ENCODE measurements at regions of chr9 and their contacts with region 1.

Region 1: GRCh38 chr9:6024020-6024554 is 8.7 kb upstream of the RANBP6 start:
- DNase-seq: peak; percentile 54
- ATAC-seq: peak; percentile 90
- H3K4me3 Mint-ChIP-seq: no peak overlapping the region
- H3K27ac Mint-ChIP-seq: no peak overlapping the region
- H3K4me1 Mint-ChIP-seq: peaks cover 5% of the 10 kb centered on the region
- H3K27me3 Mint-ChIP-seq: peaks cover 1% of the 10 kb centered on the region
- CTCF ChIP-seq: peak; percentile 73

Region 2: DNA sequence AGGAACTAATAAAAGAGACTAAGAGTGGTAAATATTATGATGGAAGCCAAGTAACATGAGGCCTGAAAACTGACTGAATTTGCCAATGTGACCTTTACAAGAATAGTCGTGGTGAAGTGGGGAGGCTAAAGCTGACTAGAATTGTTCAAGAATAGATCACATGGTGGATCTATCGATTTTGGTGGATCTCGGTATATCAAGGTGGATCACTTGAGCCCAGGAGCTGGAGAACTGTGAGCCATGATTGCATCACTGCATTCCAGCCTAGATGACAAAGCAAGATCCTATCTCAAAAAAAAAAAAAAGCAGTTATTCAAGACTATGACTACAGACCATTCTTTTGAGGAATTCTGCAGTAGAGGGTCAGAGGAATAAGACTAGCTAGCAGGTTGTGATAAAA is 206.2 kb before region 1 on chr9:
- CTCF ChIA-PET with region 1: no interaction called
- POLR2A ChIA-PET with region 1: no interaction called
- intact Hi-C with region 1: no loop called
- DNase-seq: no peak
- ATAC-seq: no peak
- H3K4me3 Mint-ChIP-seq: no peak overlapping the region
- H3K27ac Mint-ChIP-seq: no peak overlapping the region
- H3K4me1 Mint-ChIP-seq: peaks cover 12% of the 10 kb centered on the region
- H3K27me3 Mint-ChIP-seq: no peaks in the 10 kb centered on the region
- CTCF ChIP-seq: no peak

Region 3: DNA sequence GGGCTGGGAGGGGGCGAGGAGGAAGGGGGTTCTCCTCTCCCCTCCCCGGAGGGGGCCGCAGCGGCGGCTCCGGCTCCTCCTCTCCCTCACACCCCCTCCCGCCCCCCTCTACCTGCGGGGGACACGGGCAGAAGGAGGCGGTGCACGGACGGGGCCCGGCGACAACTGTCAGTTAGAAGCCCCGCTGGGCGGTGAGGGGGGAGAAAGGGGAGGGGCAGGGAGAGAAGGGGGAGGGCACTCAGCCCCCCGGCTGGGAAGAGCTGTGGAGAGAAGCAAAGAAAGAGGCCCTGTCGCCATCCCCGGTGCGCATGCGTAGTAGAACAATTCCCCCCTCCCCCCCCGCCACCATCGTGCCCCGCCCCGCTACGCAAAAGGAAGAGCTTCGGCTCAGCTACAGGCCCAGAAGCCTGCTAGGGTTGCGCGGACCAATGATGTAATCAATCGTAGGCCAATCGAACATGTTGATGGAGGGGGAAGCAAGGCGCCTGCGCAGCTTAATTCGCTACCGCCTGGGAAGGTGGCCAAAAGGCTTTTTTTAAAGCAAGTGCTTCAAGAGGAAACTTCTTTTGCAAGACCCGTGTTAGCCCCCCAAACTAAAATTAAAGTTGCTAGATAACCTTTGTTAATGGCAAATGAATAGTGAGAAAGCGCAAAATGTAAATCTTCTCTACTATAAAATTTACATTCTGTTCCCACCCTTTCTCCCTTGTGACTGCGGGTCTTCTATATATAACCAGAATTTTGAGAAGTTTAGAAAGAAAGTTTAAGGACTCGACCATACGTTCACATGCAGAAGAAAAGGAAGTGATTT is 15.7 kb before region 1 on chr9:
- CTCF ChIA-PET with region 1: interaction called, 11 read pairs
- POLR2A ChIA-PET with region 1: interaction called, 3 read pairs
- intact Hi-C with region 1: no loop called
- DNase-seq: peak; percentile 97
- ATAC-seq: peak; percentile 81
- H3K4me3 Mint-ChIP-seq: peak overlapping the region; percentile 96
- H3K27ac Mint-ChIP-seq: peak overlapping the region; percentile 84
- H3K4me1 Mint-ChIP-seq: peaks cover 60% of the 10 kb centered on the region
- H3K27me3 Mint-ChIP-seq: no peaks in the 10 kb centered on the region
- CTCF ChIP-seq: no peak

Region 4: DNA sequence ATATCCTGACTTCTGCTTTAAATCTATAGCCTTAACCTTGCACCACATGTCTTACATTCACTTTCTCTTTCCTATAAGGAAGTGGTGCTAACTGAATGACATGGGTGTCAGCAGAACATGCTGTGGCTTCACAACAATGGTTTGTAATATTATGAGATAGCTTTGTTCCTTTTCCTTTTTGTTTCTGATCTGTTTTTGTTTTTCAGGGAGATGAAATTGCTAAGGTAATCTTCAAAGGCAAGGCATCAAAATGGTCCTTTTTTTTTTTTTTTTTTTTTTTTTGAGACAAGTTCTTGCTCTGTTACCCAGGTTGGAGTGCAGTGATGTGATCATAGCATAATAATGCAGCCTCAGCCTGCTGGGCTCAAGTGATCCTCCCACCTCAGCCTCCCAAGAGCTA is 44.9 kb after region 1 on chr9:
- CTCF ChIA-PET with region 1: interaction called, 10 read pairs
- POLR2A ChIA-PET with region 1: interaction called, 3 read pairs
- intact Hi-C with region 1: no loop called
- DNase-seq: peak; percentile 28
- ATAC-seq: peak; percentile 98
- H3K4me3 Mint-ChIP-seq: peak overlapping the region; percentile 45
- H3K27ac Mint-ChIP-seq: peak overlapping the region; percentile 86
- H3K4me1 Mint-ChIP-seq: peaks cover 9% of the 10 kb centered on the region
- H3K27me3 Mint-ChIP-seq: no peaks in the 10 kb centered on the region
- CTCF ChIP-seq: no peak